CD4-positive, alpha-beta memory T cell (primary cell): ENCODE measurements at regions of chr17 and their contacts with region 1.

Region 1: GRCh38 chr17:4966844-4967538 is 626 bp downstream of the SPAG7 start:
- DNase-seq: peak; percentile 96 to 99 (median 98)
- H3K4me3 ChIP-seq: peak overlapping the region; percentile 64 to 95
- H3K4me3 Mint-ChIP-seq: peak overlapping the region in 1 of 8 donors; percentile 56
- H3K27ac ChIP-seq: peak overlapping the region; percentile 81
- H3K27ac Mint-ChIP-seq: peak overlapping the region in 2 of 7 donors; percentile 81 to 85
- H3K4me1 ChIP-seq: peaks cover 28% of the 10 kb centered on the region
- H3K4me1 Mint-ChIP-seq: peaks cover 16 to 27% (median 24%) of the 10 kb centered on the region in 4 donors
- H3K27me3 ChIP-seq: no peaks in the 10 kb centered on the region
- H3K27me3 Mint-ChIP-seq: no peaks in the 10 kb centered on the region

Region 2: DNA sequence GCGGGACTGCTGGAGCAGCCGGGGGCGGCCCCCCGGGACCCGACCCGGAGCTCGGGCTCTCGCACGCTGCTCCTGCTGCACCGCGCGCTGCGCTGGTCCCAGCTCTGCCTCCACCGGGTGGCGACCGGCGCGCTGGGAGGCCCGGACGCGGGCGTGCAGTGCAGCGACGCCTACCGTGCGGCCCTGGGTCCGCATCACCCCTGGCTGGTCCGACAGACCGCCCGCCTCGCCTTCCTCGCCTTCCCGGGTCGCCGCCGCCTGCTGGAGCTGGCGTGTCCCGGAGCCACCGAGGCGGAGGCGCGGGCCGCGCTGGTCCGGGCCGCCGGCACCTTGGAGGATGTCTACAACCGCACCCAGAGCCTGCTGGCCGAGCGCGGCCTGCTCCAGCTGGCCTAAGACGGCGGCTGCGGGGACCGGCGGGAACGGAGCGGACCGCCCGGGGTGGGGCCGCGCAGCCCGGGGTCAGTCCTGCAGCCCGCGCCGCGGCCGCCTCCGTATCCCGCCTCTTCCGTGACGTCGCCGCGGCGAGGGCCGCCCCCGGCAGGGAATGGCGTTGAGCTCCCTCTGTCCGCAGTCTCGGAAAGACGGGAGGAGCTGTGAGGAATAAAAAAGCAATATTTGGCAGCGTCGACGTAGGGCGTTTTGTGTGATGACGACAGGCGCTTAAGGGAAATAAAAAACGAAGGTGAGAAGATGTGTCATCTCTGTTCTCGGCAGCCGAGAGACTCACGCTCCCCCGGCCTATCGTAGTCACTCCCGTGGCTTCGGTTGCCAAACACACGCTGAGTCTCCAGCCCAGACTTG is 176.9 kb before region 1 on chr17:
- CTCF ChIA-PET with region 1: interaction called, 6 read pairs
- POLR2A ChIA-PET with region 1: interaction called, 16 read pairs
- intact Hi-C with region 1: loop called (anchors 1 kb)
- DNase-seq: peak; percentile 77 to 87 (median 80)
- H3K4me3 ChIP-seq: peak overlapping the region; percentile 49 to 60
- H3K4me3 Mint-ChIP-seq: peak overlapping the region; percentile 88 to 94 (median 90)
- H3K27ac ChIP-seq: peak overlapping the region; percentile 72
- H3K27ac Mint-ChIP-seq: peak overlapping the region; percentile 63 to 96 (median 88)
- H3K4me1 ChIP-seq: peaks cover 26% of the 10 kb centered on the region
- H3K4me1 Mint-ChIP-seq: peaks cover 12 to 41% (median 15%) of the 10 kb centered on the region in 4 donors
- H3K27me3 ChIP-seq: peaks cover 11% of the 10 kb centered on the region
- H3K27me3 Mint-ChIP-seq: peaks cover 22 to 23% of the 10 kb centered on the region in 2 donors

Region 3: GRCh38 chr17:4934173-4934979 is 32.6 kb before region 1 on chr17:
- CTCF ChIA-PET with region 1: interaction called, 19 read pairs
- POLR2A ChIA-PET with region 1: interaction called, 973 read pairs
- intact Hi-C with region 1: loop called (anchors 5 kb)
- DNase-seq: peak in 1 of 5 donors; percentile 23
- H3K4me3 ChIP-seq: no peak overlapping the region
- H3K4me3 Mint-ChIP-seq: peak overlapping the region in 5 of 8 donors; percentile 8 to 65 (median 55)
- H3K27ac ChIP-seq: no peak overlapping the region
- H3K27ac Mint-ChIP-seq: peak overlapping the region in 5 of 7 donors; percentile 41 to 86 (median 57)
- H3K4me1 ChIP-seq: peaks cover 26% of the 10 kb centered on the region
- H3K4me1 Mint-ChIP-seq: peaks cover 23 to 50% (median 33%) of the 10 kb centered on the region in 4 donors
- H3K27me3 ChIP-seq: no peaks in the 10 kb centered on the region
- H3K27me3 Mint-ChIP-seq: no peaks in the 10 kb centered on the region

Region 4: GRCh38 chr17:4956493-4957061 is 10.4 kb before region 1 on chr17:
- CTCF ChIA-PET with region 1: interaction called, 22 read pairs
- POLR2A ChIA-PET with region 1: interaction called, 973 read pairs
- intact Hi-C with region 1: no loop called
- DNase-seq: peak in 2 of 5 donors; percentile 29 to 35
- H3K4me3 ChIP-seq: no peak overlapping the region
- H3K4me3 Mint-ChIP-seq: no peak overlapping the region
- H3K27ac ChIP-seq: no peak overlapping the region
- H3K27ac Mint-ChIP-seq: peak overlapping the region in 1 of 7 donors; percentile 50
- H3K4me1 ChIP-seq: no peaks in the 10 kb centered on the region
- H3K4me1 Mint-ChIP-seq: peaks cover 4 to 17% (median 10%) of the 10 kb centered on the region in 4 donors
- H3K27me3 ChIP-seq: no peaks in the 10 kb centered on the region
- H3K27me3 Mint-ChIP-seq: no peaks in the 10 kb centered on the region

Region 5: DNA sequence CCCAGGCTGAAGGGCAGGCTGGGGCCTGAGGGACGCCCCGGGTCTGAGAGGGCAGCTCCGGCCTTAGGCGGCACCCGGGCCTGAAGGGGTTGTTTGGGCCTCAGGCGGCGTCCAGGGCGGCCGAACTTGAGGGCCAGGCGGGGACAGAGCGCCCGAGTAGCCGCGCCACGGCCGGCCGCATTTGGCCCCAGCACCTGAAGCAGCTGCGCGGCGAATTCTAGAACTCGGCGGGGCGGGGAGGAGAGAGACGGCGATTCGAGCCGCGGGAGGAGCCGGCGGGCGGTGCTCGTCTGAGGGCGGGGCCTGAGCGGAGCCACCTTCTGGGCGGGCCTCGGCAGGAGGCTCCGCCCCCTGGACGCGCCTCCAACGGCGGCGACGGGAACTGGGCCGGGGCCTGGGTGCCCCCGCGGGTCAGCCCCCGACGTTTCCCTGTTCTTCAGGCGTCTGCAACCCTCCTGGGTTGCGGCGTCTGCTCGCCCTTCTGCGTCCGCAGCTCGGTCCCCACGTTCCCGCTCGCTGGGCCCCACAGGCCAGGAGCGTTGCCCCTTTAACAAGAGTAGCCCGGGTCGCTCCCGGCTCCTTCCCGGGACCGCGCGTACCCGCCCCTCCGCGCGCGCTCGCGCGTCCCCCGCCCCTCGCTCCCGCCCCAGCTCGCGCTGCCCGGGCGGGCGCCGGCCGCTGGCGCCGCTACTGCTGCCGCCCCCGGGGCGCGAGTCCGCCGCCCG is 30.5 kb after region 1 on chr17 and contains the starts of genes INCA1 and KIF1C:
- CTCF ChIA-PET with region 1: no interaction called
- POLR2A ChIA-PET with region 1: interaction called, 40 read pairs
- intact Hi-C with region 1: no loop called
- DNase-seq: peak; percentile 88 to 94 (median 92)
- H3K4me3 ChIP-seq: peak within 1 kb of the TSS; percentile 36 to 72
- H3K4me3 Mint-ChIP-seq: peak within 1 kb of the TSS; percentile 78 to 91 (median 84)
- H3K27ac ChIP-seq: peak within 1 kb of the TSS; percentile 79
- H3K27ac Mint-ChIP-seq: peak within 1 kb of the TSS; percentile 75 to 94 (median 87)
- H3K4me1 ChIP-seq: peaks cover 22% of the 10 kb centered on the region
- H3K4me1 Mint-ChIP-seq: peaks cover 10 to 42% (median 24%) of the 10 kb centered on the region in 4 donors
- H3K27me3 ChIP-seq: no peaks in the 10 kb centered on the region
- H3K27me3 Mint-ChIP-seq: no peaks in the 10 kb centered on the region
- total RNA-seq, gene INCA1: 0.36 to 0.67 TPM
- total RNA-seq, gene KIF1C: 29.8 to 36.9 TPM

Region 6: DNA sequence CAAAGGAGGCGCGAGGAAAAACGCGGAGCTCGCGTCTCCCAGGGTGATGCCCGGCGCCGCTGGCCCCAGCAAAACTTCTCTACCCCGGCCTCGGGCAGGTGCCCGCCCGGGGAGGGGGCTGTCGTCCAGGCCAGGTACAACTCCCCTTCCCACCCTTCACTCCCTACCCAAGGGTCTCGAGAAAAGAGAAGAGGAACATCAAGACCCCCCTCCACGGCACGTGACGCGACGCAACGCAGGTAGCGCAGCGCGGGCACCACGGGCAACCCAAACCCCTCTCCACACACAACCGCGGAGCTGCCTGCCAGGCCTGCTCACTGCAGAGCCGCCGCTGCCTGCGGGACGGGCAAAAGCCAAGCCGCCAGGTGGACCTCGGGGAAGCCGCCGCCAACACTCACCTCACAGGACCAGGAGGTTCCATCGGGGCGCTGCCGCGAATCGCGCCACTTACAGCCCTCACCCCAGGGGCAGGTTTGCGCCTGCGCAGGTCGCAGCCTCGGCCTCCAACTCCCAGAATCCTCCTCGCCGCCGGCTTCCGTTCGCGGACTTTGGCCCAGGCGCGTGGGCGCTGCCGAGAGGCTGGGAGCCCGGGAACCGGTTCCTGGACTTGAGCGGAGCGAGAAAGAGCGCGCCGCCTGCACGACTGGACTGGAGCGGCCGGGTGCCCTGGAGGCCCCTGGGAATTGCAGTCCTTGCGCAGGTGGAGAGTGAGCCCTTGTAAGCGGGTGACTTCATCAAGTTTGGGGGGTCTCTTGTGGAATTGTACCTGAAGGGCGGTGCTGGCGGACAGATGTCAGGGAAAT is 144.6 kb after region 1 on chr17 and contains the start of gene ZNF232:
- CTCF ChIA-PET with region 1: no interaction called
- POLR2A ChIA-PET with region 1: interaction called, 3 read pairs
- intact Hi-C with region 1: loop called (anchors 1 kb)
- DNase-seq: peak; percentile 85 to 89 (median 88)
- H3K4me3 ChIP-seq: peak within 1 kb of the TSS; percentile 89 to 94
- H3K4me3 Mint-ChIP-seq: peak within 1 kb of the TSS; percentile 83 to 92 (median 91)
- H3K27ac ChIP-seq: peak within 1 kb of the TSS; percentile 57
- H3K27ac Mint-ChIP-seq: peak within 1 kb of the TSS; percentile 18 to 94 (median 75)
- H3K4me1 ChIP-seq: peaks cover 13% of the 10 kb centered on the region
- H3K4me1 Mint-ChIP-seq: peaks cover 11 to 34% (median 22%) of the 10 kb centered on the region in 4 donors
- H3K27me3 ChIP-seq: peaks cover 4% of the 10 kb centered on the region
- H3K27me3 Mint-ChIP-seq: peaks cover 8 to 14% of the 10 kb centered on the region in 2 donors
- total RNA-seq, gene ZNF232: 18.7 to 19.7 TPM

Region 7: GRCh38 chr17:5667871-5668270 is 700.9 kb after region 1 on chr17:
- CTCF ChIA-PET with region 1: no interaction called
- POLR2A ChIA-PET with region 1: no interaction called
- intact Hi-C with region 1: no loop called
- DNase-seq: no peak
- H3K4me3 ChIP-seq: no peak overlapping the region
- H3K4me3 Mint-ChIP-seq: no peak overlapping the region
- H3K27ac ChIP-seq: no peak overlapping the region
- H3K27ac Mint-ChIP-seq: no peak overlapping the region
- H3K4me1 ChIP-seq: no peaks in the 10 kb centered on the region
- H3K4me1 Mint-ChIP-seq: no peaks in the 10 kb centered on the region
- H3K27me3 ChIP-seq: peaks cover 5% of the 10 kb centered on the region
- H3K27me3 Mint-ChIP-seq: peaks cover 14 to 23% of the 10 kb centered on the region in 2 donors